Naive thymus-derived CD4-positive, alpha-beta T cell (primary cell): ENCODE measurements at regions of chr16 and their contacts with region 1.

Region 1: DNA sequence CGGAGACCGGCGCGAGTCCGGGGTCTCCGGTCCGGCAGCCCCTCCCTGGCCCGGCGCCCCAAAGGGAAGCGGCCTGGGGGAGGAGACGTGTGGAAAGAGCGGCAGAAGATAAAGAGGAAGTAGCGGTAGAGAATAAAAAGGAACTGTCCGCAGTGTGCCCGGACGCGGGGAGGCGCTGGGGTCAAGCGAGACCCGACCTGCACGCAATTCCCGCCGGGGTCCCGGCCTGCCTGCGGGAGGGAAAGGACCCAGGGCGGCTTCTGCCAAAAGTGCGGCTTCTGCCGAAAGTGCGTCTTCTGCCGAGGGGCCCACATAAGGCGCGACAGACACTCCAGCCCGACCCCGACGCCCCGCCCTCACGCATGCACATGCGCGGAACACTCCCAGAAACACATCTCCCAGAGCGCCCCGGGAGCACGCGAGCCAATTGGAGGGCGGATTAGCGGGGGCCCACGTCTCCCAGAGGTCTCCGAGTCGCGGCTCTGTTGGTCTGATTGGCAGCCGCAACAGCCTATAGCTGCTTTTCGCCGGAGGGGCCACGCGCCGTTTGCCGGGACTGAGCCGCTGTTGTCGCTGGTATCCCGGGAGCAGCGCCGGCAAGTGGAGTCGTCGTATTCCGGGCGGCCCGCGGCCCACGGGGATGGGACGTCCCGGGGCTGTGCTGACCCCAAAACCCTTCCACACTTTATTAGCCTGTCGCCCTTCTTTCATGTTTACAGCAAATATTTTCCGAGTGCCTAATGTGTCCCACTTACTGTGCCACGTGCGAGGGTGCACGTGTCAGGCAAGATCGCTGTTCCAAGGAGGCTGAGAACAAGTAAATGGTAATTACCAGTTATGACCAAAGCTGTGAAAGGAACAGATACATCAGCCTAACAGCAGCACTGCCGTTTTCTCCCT is 8.0 kb upstream of the MEFV start:
- DNase-seq: peak; percentile 88 to 97 (median 96)
- ATAC-seq: peak; percentile 88
- H3K4me3 ChIP-seq: peak overlapping the region; percentile 81
- H3K4me3 Mint-ChIP-seq: peak overlapping the region; percentile 84 to 97 (median 93)
- H3K27ac ChIP-seq: peak overlapping the region; percentile 92
- H3K27ac Mint-ChIP-seq: peak overlapping the region; percentile 93 to 98 (median 97)
- H3K4me1 ChIP-seq: peaks cover 18 to 20% of the 10 kb centered on the region in 2 donors
- H3K4me1 Mint-ChIP-seq: peaks cover 6 to 42% (median 29%) of the 10 kb centered on the region in 7 donors
- H3K27me3 ChIP-seq: no peaks in the 10 kb centered on the region
- H3K27me3 Mint-ChIP-seq: no peaks in the 10 kb centered on the region

Region 2: DNA sequence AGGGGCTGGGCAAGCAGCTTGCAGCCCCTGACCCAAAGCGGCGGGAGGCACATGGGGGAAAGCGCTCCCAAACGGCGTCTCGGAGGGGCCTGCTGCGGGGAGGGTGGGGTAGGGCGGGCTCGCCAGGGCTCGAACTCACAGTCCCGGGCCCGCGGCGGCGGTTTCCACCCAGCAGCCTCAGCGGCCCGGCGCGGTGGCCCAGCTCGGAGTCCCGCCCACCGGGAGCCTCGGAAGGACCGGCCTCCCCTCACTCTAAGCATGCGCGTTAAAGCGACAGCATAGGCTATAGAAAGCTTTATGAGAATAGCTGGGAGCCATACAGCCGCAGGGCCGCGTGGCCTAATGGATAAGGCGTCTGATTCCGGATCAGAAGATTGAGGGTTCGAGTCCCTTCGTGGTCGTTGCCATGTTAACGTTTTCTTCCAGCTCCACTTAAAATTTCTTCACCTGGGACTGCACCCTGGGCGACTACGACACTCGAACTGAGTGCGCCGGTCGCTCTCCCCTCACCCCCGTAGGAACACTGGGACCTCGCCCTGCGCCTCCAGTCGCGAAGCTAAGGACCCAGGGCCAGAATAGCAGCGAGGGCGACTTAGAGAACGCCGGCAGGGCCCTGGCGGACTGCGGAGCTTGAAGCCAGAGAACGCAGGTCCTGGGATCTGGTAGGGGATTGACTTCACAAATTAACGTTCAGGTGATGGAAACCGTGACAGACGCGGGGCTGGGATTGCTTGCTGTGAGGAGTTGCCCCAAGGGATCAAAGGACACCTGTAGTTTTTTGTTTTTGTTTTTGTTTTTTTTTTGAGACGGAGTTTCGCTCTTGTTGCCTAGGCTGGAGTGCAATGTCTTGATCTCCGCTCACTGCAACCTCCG is 113.8 kb before region 1 on chr16:
- CTCF ChIA-PET with region 1: no interaction called
- POLR2A ChIA-PET with region 1: interaction called, 5 read pairs
- intact Hi-C with region 1: loop called in 1 of 2 experiments (anchors 1 kb)
- DNase-seq: peak; percentile 90 to 100 (median 97)
- ATAC-seq: peak; percentile 90
- H3K4me3 ChIP-seq: peak overlapping the region; percentile 73
- H3K4me3 Mint-ChIP-seq: peak overlapping the region; percentile 83 to 93 (median 90)
- H3K27ac ChIP-seq: peak overlapping the region; percentile 71
- H3K27ac Mint-ChIP-seq: peak overlapping the region; percentile 85 to 98 (median 94)
- H3K4me1 ChIP-seq: peaks cover 0 to 5% of the 10 kb centered on the region in 2 donors
- H3K4me1 Mint-ChIP-seq: peaks cover 11 to 42% (median 22%) of the 10 kb centered on the region in 7 donors
- H3K27me3 ChIP-seq: no peaks in the 10 kb centered on the region
- H3K27me3 Mint-ChIP-seq: peaks cover 0 to 25% (median 0%) of the 10 kb centered on the region in 5 donors

Region 3: DNA sequence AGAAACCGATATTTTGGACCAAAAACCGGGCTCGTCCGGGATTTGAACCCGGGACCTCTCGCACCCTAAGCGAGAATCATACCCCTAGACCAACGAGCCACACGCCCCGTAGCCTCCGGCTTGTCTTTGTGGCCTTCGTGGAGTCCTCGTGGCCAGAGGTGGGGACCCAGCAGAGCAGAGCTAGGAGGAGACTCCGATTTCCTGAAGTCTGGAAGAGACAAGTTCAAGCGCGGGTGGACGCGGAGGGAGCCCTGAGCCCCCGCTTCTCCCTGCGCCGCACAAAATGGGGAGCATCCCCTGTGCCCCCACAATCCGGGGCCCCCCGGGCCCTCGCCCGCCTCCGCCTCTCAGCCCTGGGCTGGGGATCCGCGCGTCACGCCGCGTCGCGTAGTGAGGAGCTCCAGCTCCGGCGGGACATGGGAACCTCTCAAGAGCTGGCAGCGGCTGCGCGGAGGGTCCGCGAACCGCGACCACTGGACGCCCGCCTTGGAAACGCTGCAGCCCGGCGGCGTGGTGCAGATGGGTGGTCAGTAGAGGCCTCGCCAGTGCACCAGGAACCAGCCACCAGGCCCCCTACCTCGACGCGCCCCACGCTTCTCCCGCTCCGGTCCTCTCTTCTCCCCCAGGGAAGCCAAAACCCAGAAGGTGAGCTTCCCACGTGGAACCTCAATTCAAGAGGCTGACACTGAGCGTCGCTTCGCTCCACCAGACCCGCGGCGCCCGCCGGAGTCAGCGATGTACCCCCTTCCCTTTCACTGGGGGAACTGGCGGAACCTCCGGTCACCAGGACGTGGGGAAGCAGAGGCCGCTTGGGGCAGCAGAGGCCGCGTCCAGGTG is 81.6 kb before region 1 on chr16:
- CTCF ChIA-PET with region 1: no interaction called
- POLR2A ChIA-PET with region 1: interaction called, 13 read pairs
- intact Hi-C with region 1: loop called (anchors 2 kb)
- DNase-seq: peak in 5 of 9 donors; percentile 32 to 71 (median 43)
- ATAC-seq: peak; percentile 41
- H3K4me3 ChIP-seq: peak overlapping the region; percentile 58
- H3K4me3 Mint-ChIP-seq: peak overlapping the region; percentile 72 to 86 (median 79)
- H3K27ac ChIP-seq: no peak overlapping the region
- H3K27ac Mint-ChIP-seq: peak overlapping the region in 7 of 9 donors; percentile 22 to 86 (median 49)
- H3K4me1 ChIP-seq: peaks cover 8 to 16% of the 10 kb centered on the region in 2 donors
- H3K4me1 Mint-ChIP-seq: peaks cover 24 to 38% (median 27%) of the 10 kb centered on the region in 7 donors
- H3K27me3 ChIP-seq: peaks cover 4 to 26% of the 10 kb centered on the region in 2 donors
- H3K27me3 Mint-ChIP-seq: peaks cover 77 to 88% (median 81%) of the 10 kb centered on the region in 5 donors

Region 4: GRCh38 chr16:3234543-3235541 is 29.5 kb before region 1 on chr16 and contains the start of gene ZNF200:
- CTCF ChIA-PET with region 1: interaction called, 4 read pairs
- POLR2A ChIA-PET with region 1: interaction called, 11 read pairs
- intact Hi-C with region 1: loop called (anchors 1 kb)
- DNase-seq: peak; percentile 85 to 96 (median 94)
- ATAC-seq: peak; percentile 94
- H3K4me3 ChIP-seq: peak within 1 kb of the TSS; percentile 98
- H3K4me3 Mint-ChIP-seq: peak within 1 kb of the TSS; percentile 88 to 97 (median 94)
- H3K27ac ChIP-seq: peak within 1 kb of the TSS; percentile 90
- H3K27ac Mint-ChIP-seq: peak within 1 kb of the TSS; percentile 93 to 98 (median 97)
- H3K4me1 ChIP-seq: peaks cover 18 to 23% of the 10 kb centered on the region in 2 donors
- H3K4me1 Mint-ChIP-seq: peaks cover 20 to 48% (median 39%) of the 10 kb centered on the region in 7 donors
- H3K27me3 ChIP-seq: no peaks in the 10 kb centered on the region
- H3K27me3 Mint-ChIP-seq: peaks cover 0 to 3% (median 0%) of the 10 kb centered on the region in 5 donors
- total RNA-seq, gene ZNF200: 4.8 to 33.3 (median 16.6) TPM

Region 5: GRCh38 chr16:3400779-3401688 is 136.6 kb after region 1 on chr16 and contains the starts of genes ZNF174 and ZSCAN32:
- CTCF ChIA-PET with region 1: no interaction called
- POLR2A ChIA-PET with region 1: interaction called, 13 read pairs
- intact Hi-C with region 1: loop called (anchors 1 kb)
- DNase-seq: peak; percentile 90 to 99 (median 98)
- ATAC-seq: peak; percentile 99
- H3K4me3 ChIP-seq: peak within 1 kb of the TSS; percentile 87
- H3K4me3 Mint-ChIP-seq: peak within 1 kb of the TSS; percentile 84 to 97 (median 94)
- H3K27ac ChIP-seq: peak within 1 kb of the TSS; percentile 89
- H3K27ac Mint-ChIP-seq: peak within 1 kb of the TSS; percentile 88 to 95 (median 91)
- H3K4me1 ChIP-seq: peaks cover 20 to 22% of the 10 kb centered on the region in 2 donors
- H3K4me1 Mint-ChIP-seq: peaks cover 14 to 77% (median 65%) of the 10 kb centered on the region in 7 donors
- H3K27me3 ChIP-seq: no peaks in the 10 kb centered on the region
- H3K27me3 Mint-ChIP-seq: no peaks in the 10 kb centered on the region
- total RNA-seq, gene ZNF174: 4.7 to 22.8 (median 13.5) TPM
- total RNA-seq, gene ZSCAN32: 9.7 to 31.1 (median 19.0) TPM

Region 6: GRCh38 chr16:3503523-3503922 is 239.1 kb after region 1 on chr16:
- CTCF ChIA-PET with region 1: no interaction called
- POLR2A ChIA-PET with region 1: no interaction called
- intact Hi-C with region 1: loop called (anchors 2 kb)
- DNase-seq: peak in 8 of 9 donors; percentile 50 to 81 (median 70)
- ATAC-seq: peak; percentile 49
- H3K4me3 ChIP-seq: peak overlapping the region; percentile 3
- H3K4me3 Mint-ChIP-seq: peak overlapping the region; percentile 76 to 94 (median 84)
- H3K27ac ChIP-seq: peak overlapping the region; percentile 92
- H3K27ac Mint-ChIP-seq: peak overlapping the region; percentile 90 to 98 (median 95)
- H3K4me1 ChIP-seq: peaks cover 40 to 47% of the 10 kb centered on the region in 2 donors
- H3K4me1 Mint-ChIP-seq: peaks cover 37 to 80% (median 67%) of the 10 kb centered on the region in 7 donors
- H3K27me3 ChIP-seq: no peaks in the 10 kb centered on the region
- H3K27me3 Mint-ChIP-seq: no peaks in the 10 kb centered on the region

Region 7: DNA sequence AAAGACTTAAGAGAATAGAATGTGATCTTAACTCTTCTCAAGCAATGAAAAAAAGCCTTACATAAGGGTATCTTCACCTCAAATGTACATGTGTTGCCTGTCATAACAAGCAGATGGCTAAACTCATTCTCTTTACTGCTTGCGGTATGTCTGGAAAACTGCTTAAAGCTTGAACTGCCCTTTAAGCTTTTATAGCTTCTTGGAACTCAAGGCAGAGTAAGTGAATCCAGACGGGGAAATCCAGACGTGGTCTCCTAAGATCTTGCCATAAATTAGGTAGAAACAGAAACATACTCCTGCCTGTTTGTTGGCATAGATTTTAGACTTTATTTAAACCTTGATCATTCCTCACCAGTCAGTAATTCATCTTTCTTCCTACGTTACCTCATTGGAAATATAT is 256.0 kb after region 1 on chr16:
- CTCF ChIA-PET with region 1: no interaction called
- POLR2A ChIA-PET with region 1: no interaction called
- intact Hi-C with region 1: no loop called
- DNase-seq: no peak
- ATAC-seq: no peak
- H3K4me3 ChIP-seq: no peak overlapping the region
- H3K4me3 Mint-ChIP-seq: no peak overlapping the region
- H3K27ac ChIP-seq: no peak overlapping the region
- H3K27ac Mint-ChIP-seq: peak overlapping the region in 2 of 9 donors; percentile 21 to 28
- H3K4me1 ChIP-seq: no peaks in the 10 kb centered on the region
- H3K4me1 Mint-ChIP-seq: peaks cover 0 to 18% (median 11%) of the 10 kb centered on the region in 7 donors
- H3K27me3 ChIP-seq: no peaks in the 10 kb centered on the region
- H3K27me3 Mint-ChIP-seq: no peaks in the 10 kb centered on the region